ENCODE measurements at regions of chr17 and their contacts with region 1.

Region 1: GRCh38 chr17:72318131-72318530 is 197.3 kb downstream of the SOX9 start:
- DNase-seq: no peak
- CTCF ChIP-seq: no peak

Region 2: GRCh38 chr17:72240333-72240732 is 77.8 kb before region 1 on chr17:
- CTCF ChIA-PET with region 1: no interaction called
- POLR2A ChIA-PET with region 1: no interaction called
- DNase-seq: peak; percentile 24
- CTCF ChIP-seq: no peak

Region 3: DNA sequence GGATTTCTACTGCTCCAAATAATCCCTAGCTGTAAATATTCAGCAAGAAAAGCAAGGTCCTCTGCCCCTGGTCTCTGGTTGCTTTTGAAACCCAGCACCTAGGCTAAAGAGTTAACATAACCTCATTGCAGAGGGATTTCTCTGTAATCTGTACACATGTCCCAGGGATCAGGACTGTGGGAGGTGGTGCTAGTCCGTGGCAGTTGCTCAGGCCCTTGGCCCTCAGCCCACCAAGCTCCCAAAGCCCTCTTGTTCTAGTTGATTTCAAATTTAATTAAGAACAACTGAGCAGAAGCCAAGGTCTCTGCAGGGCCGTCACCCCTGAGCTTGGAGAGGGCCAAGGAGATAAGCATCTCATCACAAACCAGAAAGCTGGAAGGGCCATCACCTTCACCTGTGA is 16.2 kb before region 1 on chr17:
- CTCF ChIA-PET with region 1: interaction called, 12 read pairs
- POLR2A ChIA-PET with region 1: no interaction called
- DNase-seq: no peak
- CTCF ChIP-seq: no peak

Region 4: DNA sequence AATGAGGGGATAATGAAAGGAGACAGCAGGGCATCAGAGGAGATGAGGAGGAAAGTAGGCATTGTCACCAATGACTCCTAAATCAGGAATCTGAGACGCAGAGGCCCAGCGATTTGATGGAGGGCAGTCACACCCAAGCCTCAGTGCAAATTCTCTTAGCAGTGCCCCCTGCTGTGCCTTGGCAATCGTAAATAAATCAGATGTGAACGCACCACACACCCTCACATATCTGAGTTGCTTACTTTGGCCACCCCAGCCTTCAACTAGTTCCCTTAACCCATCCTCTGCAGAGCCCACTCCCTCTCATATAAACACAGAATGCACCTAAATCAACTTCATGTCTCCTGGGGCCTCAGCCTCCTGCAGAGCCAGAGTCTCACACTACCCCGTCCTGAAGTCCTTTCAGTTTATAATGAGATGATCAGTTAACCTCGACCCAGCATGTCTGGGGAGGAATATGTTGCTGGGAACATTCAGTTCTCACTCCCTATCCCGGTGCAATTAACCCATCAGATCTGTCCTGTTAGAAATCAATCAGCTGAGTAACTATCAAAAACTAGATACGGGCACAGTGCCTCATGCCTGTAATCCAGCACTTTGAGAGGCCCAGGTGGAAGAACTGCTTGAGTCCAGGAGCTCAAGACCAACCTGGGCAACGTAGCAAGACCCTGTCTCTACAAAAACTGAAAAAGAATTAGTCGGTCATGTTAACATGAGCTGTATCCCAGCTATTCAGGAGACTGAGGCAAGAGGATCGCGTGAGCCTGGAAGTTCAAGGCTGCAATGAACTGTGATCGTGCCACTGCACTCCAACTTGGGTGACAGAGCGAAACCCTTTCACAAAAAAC is 695.9 kb after region 1 on chr17:
- CTCF ChIA-PET with region 1: no interaction called
- POLR2A ChIA-PET with region 1: no interaction called
- DNase-seq: no peak
- CTCF ChIP-seq: no peak

Measured in GM10248 (cell line).